Endothelial cell of umbilical vein (primary cell): ENCODE measurements at regions of chr4 and their contacts with region 1.

Region 1: GRCh38 chr4:76377911-76378310 is 43.0 kb downstream of the CCDC158 start:
- DNase-seq: peak; percentile 38
- H3K4me3 ChIP-seq: no peak overlapping the region
- H3K27ac ChIP-seq: no peak overlapping the region
- H3K4me1 ChIP-seq: peaks cover 20% of the 10 kb centered on the region
- H3K27me3 ChIP-seq: peaks cover 0 to 2% of the 10 kb centered on the region in 2 experiments
- CTCF ChIP-seq: peak; percentile 53 to 71
- POLR2A ChIP-seq: no peak

Region 2: DNA sequence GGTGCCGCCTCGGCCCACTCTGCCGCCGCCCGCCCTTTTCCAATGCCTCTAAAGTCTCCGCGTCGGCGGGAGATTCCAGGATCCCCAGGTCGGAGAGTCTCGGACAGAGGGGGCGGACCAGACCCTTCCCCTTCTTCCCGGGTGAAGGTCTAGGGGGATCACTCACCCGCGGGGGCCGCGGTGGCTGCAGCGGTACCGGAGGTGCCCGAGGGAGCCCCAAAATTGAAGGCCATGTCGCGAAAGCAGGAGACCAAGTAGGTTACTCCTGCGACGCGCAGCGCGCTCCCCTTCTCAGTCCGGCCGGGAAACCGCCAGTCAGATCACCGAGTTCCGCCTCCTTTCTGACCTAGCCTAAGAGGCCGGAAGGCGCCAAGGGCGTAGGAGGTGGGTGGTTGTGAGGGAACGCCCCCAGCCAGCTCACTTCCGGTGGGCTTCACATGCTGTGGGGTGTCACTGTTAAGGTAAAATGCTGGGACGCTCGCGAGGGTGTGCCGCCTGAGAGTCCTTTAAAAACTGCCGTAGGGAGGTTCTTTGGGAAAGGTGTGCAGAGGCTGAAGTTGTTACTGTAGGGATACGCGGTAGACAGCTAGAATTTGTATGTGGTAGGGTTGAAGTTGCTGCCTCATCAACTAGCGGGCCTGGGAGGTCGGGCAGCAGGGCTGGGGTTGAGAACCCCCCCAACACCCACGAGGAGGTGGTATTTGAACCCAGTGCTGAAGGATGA is 229.6 kb before region 1 on chr4 and contains the start of gene NUP54:
- CTCF ChIA-PET with region 1: interaction called, 5 read pairs
- POLR2A ChIA-PET with region 1: no interaction called
- dilution Hi-C with region 1: no loop called
- intact Hi-C with region 1: loop called (anchors 1 kb)
- DNase-seq: peak; percentile 97
- H3K4me3 ChIP-seq: peak within 1 kb of the TSS; percentile 87 to 91 (median 89)
- H3K27ac ChIP-seq: peak within 1 kb of the TSS; percentile 71
- H3K4me1 ChIP-seq: peaks cover 23% of the 10 kb centered on the region
- H3K27me3 ChIP-seq: no peaks in the 10 kb centered on the region
- CTCF ChIP-seq: no peak
- POLR2A ChIP-seq: peak; percentile 64
- total RNA-seq, gene NUP54: 45.7 and 49.9 TPM in 2 replicates

Region 3: GRCh38 chr4:76251441-76252270 is 126.3 kb before region 1 on chr4 and contains the start of gene FAM47E:
- CTCF ChIA-PET with region 1: interaction called, 5 read pairs
- POLR2A ChIA-PET with region 1: no interaction called
- dilution Hi-C with region 1: no loop called
- intact Hi-C with region 1: loop called (anchors 2 kb)
- DNase-seq: peak; percentile 44
- H3K4me3 ChIP-seq: peak within 1 kb of the TSS in 2 of 3 experiments; percentile 1 to 28
- H3K27ac ChIP-seq: no peak within 1 kb of the TSS
- H3K4me1 ChIP-seq: peaks cover 3% of the 10 kb centered on the region
- H3K27me3 ChIP-seq: peaks cover 50 to 70% of the 10 kb centered on the region in 2 experiments
- CTCF ChIP-seq: peak; percentile 17 to 44
- POLR2A ChIP-seq: no peak
- total RNA-seq, gene FAM47E: 0.11 TPM in 1 of 2 replicates, not detected in the other

Region 4: DNA sequence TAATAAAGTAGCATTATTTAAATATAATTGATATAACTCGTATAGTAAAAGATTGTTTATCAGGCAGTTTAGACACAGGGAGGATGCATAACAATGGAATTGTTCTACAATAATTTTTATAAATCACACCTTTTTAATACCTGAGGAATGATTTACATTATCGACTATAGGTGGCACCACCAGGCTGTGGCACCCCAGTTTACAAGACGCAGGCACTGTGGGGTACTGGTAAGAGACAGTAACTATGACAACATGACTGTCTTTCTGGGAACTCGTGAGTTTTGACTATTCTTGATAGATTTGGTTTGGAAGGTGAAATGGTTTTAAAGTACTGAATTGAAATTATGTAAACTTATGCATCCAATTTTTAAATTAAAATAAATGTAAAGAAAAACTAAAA is 98.4 kb before region 1 on chr4:
- CTCF ChIA-PET with region 1: interaction called, 13 read pairs
- POLR2A ChIA-PET with region 1: no interaction called
- dilution Hi-C with region 1: no loop called
- intact Hi-C with region 1: no loop called
- DNase-seq: no peak
- H3K4me3 ChIP-seq: no peak overlapping the region
- H3K27ac ChIP-seq: no peak overlapping the region
- H3K4me1 ChIP-seq: no peaks in the 10 kb centered on the region
- H3K27me3 ChIP-seq: peaks cover 3 to 11% of the 10 kb centered on the region in 2 experiments
- CTCF ChIP-seq: no peak
- POLR2A ChIP-seq: no peak

Region 5: DNA sequence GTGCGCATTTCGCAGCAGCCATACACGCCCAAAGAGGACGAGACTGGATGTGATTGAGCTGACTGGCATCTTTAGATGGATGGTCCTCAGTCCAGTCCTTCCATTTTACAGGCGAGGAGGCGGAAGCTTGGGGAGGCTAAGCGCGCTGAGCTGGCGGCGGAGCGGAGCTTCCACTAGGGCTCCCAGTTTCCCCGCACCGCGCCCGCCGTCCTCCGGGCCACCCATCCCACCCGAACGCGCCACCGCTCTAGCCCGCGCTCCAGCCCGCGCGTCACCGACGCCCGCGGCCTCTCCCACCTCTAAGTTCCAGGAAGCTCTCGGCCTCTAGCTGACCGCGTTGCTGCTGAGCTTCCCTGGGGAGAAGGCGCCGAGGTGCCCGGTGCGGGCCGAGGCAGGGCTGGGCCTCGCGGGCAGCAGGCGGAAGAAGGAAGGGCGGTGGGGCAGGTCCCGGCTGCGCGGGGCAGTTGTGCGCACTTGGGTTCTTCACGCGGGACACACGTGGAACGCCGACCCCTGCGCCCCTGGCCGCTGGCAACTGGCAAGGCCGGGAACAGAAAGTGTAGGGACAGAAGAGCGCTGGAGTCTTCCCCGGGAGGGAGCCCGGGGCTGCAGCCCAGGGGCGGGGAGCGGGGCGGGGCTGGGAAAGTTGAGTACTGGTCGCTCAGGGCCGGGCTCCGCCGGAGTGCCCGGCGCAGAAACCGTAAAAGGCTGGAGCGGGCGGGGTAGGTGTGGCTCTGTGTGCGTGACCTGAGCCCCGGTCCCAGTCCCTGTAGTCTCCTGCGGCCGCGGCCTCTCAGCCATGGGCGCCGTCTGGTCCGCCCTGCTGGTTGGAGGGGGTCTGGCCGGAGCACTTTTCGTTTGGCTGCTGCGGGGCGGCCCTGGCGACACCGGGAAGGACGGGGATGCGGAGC is 71.7 kb before region 1 on chr4 and contains the start of gene STBD1:
- CTCF ChIA-PET with region 1: interaction called, 24 read pairs
- POLR2A ChIA-PET with region 1: no interaction called
- dilution Hi-C with region 1: no loop called
- intact Hi-C with region 1: loop called (anchors 2 kb)
- DNase-seq: peak; percentile 57
- H3K4me3 ChIP-seq: peak within 1 kb of the TSS; percentile 33 to 75 (median 66)
- H3K27ac ChIP-seq: no peak within 1 kb of the TSS
- H3K4me1 ChIP-seq: peaks cover 6% of the 10 kb centered on the region
- H3K27me3 ChIP-seq: no peaks in the 10 kb centered on the region
- CTCF ChIP-seq: peak in 1 of 2 donors; percentile 12
- POLR2A ChIP-seq: no peak
- total RNA-seq, gene STBD1: 0.18 and 0.25 TPM in 2 replicates

Region 6: DNA sequence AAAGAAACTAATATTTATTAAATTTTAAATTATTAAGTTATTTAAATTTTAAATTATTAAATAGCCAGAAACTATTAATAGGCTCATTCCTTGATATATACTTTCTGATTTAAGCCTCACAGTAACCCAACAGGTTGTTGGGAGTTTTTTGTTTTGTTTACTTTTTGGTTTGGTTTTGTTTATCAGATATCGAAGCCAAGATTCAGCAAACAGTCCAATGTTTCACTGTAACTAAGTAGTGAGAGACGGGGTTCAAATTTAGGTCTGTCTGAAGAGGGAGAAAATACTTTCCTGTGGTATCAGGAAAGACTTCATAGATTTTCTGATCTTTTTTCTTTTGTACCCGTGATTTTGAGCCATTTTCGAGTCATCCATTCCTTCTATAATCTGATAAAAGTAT is 11.2 kb before region 1 on chr4:
- CTCF ChIA-PET with region 1: interaction called, 15 read pairs
- POLR2A ChIA-PET with region 1: no interaction called
- dilution Hi-C with region 1: no loop called
- intact Hi-C with region 1: no loop called
- DNase-seq: no peak
- H3K4me3 ChIP-seq: no peak overlapping the region
- H3K27ac ChIP-seq: no peak overlapping the region
- H3K4me1 ChIP-seq: no peaks in the 10 kb centered on the region
- H3K27me3 ChIP-seq: peaks cover 37 to 39% of the 10 kb centered on the region in 2 experiments
- CTCF ChIP-seq: no peak
- POLR2A ChIP-seq: no peak

Region 7: GRCh38 chr4:77827343-77827742 is 1449.4 kb after region 1 on chr4:
- CTCF ChIA-PET with region 1: no interaction called
- POLR2A ChIA-PET with region 1: no interaction called
- dilution Hi-C with region 1: no loop called
- intact Hi-C with region 1: no loop called
- DNase-seq: no peak
- H3K4me3 ChIP-seq: no peak overlapping the region
- H3K27ac ChIP-seq: no peak overlapping the region
- H3K4me1 ChIP-seq: no peaks in the 10 kb centered on the region
- H3K27me3 ChIP-seq: peaks cover 0 to 3% of the 10 kb centered on the region in 2 experiments
- CTCF ChIP-seq: no peak
- POLR2A ChIP-seq: no peak